ENCODE measurements at regions of chr19 and their contacts with region 1.

Region 1: DNA sequence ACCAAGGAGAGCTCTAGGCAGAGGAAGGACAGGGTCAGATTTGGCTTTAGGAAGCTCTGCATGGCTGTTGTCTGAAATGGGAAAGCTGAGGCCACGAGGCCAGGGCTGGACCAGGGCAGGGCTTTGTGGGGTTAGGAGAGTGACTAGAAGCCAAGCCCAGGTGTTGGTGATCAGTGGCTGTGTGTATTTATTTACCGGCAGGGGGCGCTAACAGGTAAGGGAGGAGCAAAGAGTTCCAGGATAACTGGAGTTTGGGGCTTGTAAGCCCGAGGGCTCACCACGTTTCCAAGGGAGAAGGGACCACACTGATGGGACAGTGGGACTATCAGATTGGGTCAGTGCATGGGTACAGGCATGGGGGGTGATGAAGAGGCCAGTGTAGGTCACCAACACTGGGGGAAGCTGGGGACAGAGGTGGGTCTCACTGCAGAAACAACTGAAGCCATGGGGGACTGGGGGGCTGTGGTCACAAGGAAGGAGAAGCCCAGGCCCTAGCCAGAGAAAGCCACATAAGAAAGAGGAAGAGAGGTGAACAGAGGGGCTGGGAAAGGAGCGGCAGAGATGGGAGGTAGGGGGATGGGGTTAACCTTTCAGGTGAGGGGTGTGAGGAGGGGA is 3.9 kb downstream of the TMEM147 start:
- DNase-seq: peak; percentile 58 to 76 (median 73)
- H3K4me3 ChIP-seq: no peak overlapping the region
- H3K27ac ChIP-seq: no peak overlapping the region
- H3K4me1 ChIP-seq: peaks cover 1 to 20% (median 15%) of the 10 kb centered on the region in 4 experiments
- H3K27me3 ChIP-seq: no peaks in the 10 kb centered on the region

Region 2: DNA sequence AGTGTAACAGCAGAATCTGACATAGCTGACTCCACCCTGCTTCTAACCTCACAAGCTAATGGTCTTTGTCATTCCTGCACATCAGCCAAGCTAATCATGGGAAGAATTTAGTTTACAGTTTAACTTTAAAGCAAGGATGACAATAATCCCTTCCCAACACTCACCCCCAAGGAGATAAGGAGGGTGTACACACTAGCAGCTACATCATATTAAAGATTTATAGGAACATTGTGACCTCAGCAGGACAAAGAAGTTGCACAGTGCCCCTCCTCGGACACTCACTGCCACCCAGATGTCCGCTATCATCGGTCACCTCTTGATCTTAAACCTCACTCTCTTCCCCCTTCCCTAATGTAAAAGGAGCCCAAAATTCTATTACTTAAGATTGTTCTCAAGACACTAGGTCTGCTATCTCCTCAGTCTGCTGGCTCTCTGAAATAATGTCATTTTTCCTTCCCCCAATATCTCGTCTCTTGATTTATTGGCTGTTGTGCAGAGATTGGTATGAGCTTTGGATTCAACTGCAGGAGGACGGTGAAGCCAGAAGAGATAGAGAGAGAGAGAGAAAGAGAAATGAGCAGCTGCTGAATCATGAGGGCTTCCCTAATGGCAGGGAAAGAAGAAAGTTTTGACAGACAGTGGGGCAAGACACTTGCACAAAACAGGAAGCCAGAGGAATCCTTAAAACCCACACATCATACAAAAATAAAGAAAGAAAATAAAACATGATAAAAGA is 118.7 kb before region 1 on chr19:
- CTCF ChIA-PET with region 1: no interaction called
- POLR2A ChIA-PET with region 1: no interaction called
- DNase-seq: peak in 2 of 3 donors; percentile 45 to 51
- H3K4me3 ChIP-seq: peak overlapping the region in 2 of 7 experiments; percentile 15 to 24
- H3K27ac ChIP-seq: no peak overlapping the region
- H3K4me1 ChIP-seq: peaks cover 0 to 24% (median 9%) of the 10 kb centered on the region in 4 experiments
- H3K27me3 ChIP-seq: no peaks in the 10 kb centered on the region

Region 3: DNA sequence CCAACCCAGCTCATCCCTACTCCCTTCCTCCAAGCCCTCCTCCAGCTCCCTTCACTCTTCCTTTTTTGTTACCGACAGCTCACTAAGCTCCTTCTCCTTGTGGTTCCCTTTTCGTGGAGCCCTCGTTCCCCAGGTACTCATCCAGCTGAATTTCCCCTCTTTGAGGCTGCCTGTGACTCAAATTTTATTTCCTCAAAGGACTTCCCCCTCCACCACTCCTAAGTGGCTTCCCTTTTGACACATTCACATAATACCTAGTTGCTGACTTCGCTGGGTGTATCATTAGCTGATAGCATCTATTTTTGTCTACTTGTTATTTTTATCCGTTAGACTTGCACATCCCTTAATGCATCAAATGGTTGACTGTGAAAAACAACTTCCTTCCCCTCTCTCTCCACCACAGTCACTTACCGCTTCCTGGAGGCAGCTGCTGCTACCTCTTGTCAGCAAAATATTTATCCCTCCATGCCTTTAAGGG is 86.8 kb before region 1 on chr19:
- CTCF ChIA-PET with region 1: no interaction called
- POLR2A ChIA-PET with region 1: no interaction called
- DNase-seq: peak; percentile 81 to 96 (median 91)
- H3K4me3 ChIP-seq: peak overlapping the region in 4 of 7 experiments; percentile 9 to 40 (median 34)
- H3K27ac ChIP-seq: peak overlapping the region in 1 of 2 experiments; percentile 57
- H3K4me1 ChIP-seq: peaks cover 15 to 65% (median 55%) of the 10 kb centered on the region in 4 experiments
- H3K27me3 ChIP-seq: no peaks in the 10 kb centered on the region

Region 4: GRCh38 chr19:35565016-35565856 is 16.0 kb after region 1 on chr19:
- CTCF ChIA-PET with region 1: interaction called, 19 read pairs
- POLR2A ChIA-PET with region 1: no interaction called
- DNase-seq: no peak
- H3K4me3 ChIP-seq: no peak overlapping the region
- H3K27ac ChIP-seq: no peak overlapping the region
- H3K4me1 ChIP-seq: no peaks in the 10 kb centered on the region
- H3K27me3 ChIP-seq: peaks cover 0 to 33% (median 6%) of the 10 kb centered on the region in 5 experiments